ENCODE measurements at regions of chr18 and their contacts with region 1.

Region 1: DNA sequence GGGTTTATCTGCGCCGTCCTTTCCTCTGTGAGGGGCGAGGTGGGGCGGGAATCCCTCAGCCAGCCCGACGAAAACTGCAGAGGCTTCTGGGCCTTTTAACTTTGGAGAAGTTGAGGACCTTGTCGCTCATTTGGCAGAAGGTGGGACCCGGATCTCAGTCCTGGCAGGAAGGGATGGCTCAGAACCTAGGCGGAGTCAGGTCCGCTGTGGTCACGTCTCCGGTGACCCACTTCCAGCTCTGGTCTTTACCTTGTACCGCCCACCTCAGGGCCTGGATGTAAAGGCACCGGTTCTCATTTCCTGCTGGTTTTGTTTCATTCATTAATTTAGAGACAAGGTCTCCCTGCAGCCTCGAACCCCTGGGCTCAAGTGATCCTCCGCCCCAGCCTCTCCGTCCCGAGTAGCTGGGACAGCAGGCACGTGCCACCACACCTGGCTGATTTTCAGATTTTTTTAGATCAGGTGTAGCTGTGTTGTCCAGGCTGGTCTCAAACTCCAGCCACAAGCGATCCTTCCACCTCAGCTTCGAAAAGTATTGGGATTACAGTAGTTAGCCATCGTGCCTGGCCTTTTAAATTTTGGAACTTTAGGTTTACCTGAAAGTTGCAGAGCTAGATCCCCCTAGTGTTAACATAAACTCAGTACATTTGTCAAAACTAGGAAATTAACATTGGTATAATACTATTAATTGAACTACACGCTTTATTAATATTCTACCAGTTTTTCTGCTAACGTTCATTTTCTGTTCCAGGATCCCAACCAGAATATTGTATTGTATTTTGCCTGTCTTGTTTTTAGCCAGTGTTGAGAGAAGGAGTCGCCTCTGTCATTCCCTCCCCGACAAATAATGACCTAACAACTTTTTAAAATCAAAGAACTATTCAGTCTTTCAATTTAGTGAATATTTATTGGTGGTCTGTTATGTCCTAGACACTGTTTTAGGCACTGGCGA is 852 bp downstream of the POLI start:
- DNase-seq: peak in 2 of 3 donors; percentile 65 to 80
- ATAC-seq: peak; percentile 60 to 74
- H3K4me3 ChIP-seq: peak overlapping the region; percentile 69
- H3K27ac ChIP-seq: peak overlapping the region; percentile 88
- H3K4me1 ChIP-seq: peaks cover 1% of the 10 kb centered on the region
- H3K27me3 ChIP-seq: no peaks in the 10 kb centered on the region

Region 2: DNA sequence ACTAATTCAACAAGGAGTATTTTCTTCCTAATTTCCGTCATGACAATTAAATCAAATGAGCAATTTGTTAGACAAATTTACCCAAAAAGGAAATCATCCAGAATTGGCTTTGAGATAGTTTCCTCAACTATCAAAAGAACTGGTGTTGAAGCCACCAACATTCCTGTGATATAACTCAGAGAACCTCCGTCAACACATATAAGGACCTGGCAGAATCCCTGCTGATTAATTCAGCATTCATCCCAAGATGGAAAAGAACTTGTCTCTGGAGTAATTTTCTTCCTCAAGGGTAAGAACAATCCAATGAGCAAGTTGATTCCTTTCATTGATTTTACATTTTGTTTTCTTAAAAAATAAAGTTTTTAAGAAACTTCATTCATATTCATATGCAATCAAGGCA is 107.7 kb before region 1 on chr18:
- intact Hi-C with region 1: loop called in 1 of 4 experiments (anchors 10 kb)
- DNase-seq: no peak
- ATAC-seq: no peak
- H3K4me3 ChIP-seq: no peak overlapping the region
- H3K27ac ChIP-seq: no peak overlapping the region
- H3K4me1 ChIP-seq: peaks cover 4% of the 10 kb centered on the region
- H3K27me3 ChIP-seq: no peaks in the 10 kb centered on the region

Region 3: GRCh38 chr18:54224379-54225014 is 45.7 kb before region 1 on chr18 and contains the start of gene MBD2:
- intact Hi-C with region 1: loop called in 3 of 4 experiments (anchors 5 kb)
- DNase-seq: peak; percentile 97 to 99 (median 98)
- ATAC-seq: peak; percentile 100
- H3K4me3 ChIP-seq: peak within 1 kb of the TSS; percentile 97
- H3K27ac ChIP-seq: peak within 1 kb of the TSS; percentile 76
- H3K4me1 ChIP-seq: no peaks in the 10 kb centered on the region
- H3K27me3 ChIP-seq: no peaks in the 10 kb centered on the region
- total RNA-seq, gene MBD2: 48.8 to 68.2 (median 60.7) TPM

Region 4: GRCh38 chr18:54433857-54434256 is 163.7 kb after region 1 on chr18:
- intact Hi-C with region 1: no loop called
- DNase-seq: no peak
- ATAC-seq: no peak
- H3K4me3 ChIP-seq: no peak overlapping the region
- H3K27ac ChIP-seq: no peak overlapping the region
- H3K4me1 ChIP-seq: no peaks in the 10 kb centered on the region
- H3K27me3 ChIP-seq: no peaks in the 10 kb centered on the region